Activated CD4-positive, alpha-beta T cell treated with anti-CD3 and anti-CD28 coated beads for 36 hours (primary cell): ENCODE measurements at regions of chr3 and their contacts with region 1.

Region 1: GRCh38 chr3:153285194-153285641 is 123.2 kb downstream of the RAP2B start:
- DNase-seq: no peak
- ATAC-seq: no peak
- H3K4me3 Mint-ChIP-seq: no peak overlapping the region
- H3K27ac Mint-ChIP-seq: peak overlapping the region; percentile 16
- H3K4me1 Mint-ChIP-seq: peaks cover 43% of the 10 kb centered on the region
- H3K27me3 Mint-ChIP-seq: no peaks in the 10 kb centered on the region

Region 2: DNA sequence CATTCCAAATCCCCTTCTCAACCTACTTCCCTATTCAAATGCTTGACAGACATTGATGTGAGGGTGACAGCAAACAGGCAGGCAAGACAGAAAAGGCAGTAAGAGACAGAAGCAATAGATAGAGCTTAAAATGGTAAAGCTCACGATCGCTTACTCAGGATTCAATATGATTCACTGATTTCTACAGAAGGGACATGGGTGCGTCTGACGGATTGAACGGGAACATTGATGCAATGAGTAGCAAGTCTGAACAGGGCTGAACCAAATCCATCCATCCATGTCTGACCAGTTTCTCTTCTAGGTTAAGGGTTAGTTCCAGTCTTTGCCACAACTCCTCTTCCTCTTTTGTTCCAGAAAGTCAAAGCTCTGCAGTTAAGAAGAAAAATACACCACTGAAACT is 415.2 kb before region 1 on chr3:
- CTCF ChIA-PET with region 1: no interaction called
- POLR2A ChIA-PET with region 1: no interaction called
- intact Hi-C with region 1: no loop called
- DNase-seq: no peak
- ATAC-seq: no peak
- H3K4me3 Mint-ChIP-seq: no peak overlapping the region
- H3K27ac Mint-ChIP-seq: no peak overlapping the region
- H3K4me1 Mint-ChIP-seq: no peaks in the 10 kb centered on the region
- H3K27me3 Mint-ChIP-seq: no peaks in the 10 kb centered on the region

Region 3: DNA sequence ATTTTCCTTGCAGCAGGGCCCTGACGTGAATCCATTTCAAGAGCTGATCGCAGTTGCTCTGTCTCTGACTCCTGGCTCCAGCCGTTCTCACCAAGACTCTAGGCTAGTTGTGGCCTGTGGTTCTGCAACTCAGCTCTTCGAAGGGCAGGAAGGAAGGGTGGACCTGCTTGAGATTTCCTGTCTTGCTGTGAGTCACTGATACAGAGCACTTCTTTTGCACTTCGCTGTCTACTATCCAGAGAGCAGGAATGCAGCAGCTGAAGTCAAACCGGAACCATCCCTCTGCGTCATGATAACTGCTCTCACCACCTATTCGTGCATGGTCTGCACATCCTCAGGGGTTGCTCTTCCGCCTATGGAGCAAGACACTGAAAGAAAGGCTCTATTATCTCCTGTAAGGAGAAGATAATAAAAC is 63.5 kb before region 1 on chr3:
- CTCF ChIA-PET with region 1: no interaction called
- POLR2A ChIA-PET with region 1: no interaction called
- intact Hi-C with region 1: loop called in 1 of 2 experiments (anchors 5 kb)
- DNase-seq: peak; percentile 68
- ATAC-seq: peak; percentile 97
- H3K4me3 Mint-ChIP-seq: peak overlapping the region; percentile 58
- H3K27ac Mint-ChIP-seq: peak overlapping the region; percentile 88
- H3K4me1 Mint-ChIP-seq: peaks cover 59% of the 10 kb centered on the region
- H3K27me3 Mint-ChIP-seq: no peaks in the 10 kb centered on the region